Panc1 (cell line): ENCODE measurements at regions of chr5 and their contacts with region 1.

Region 1: DNA sequence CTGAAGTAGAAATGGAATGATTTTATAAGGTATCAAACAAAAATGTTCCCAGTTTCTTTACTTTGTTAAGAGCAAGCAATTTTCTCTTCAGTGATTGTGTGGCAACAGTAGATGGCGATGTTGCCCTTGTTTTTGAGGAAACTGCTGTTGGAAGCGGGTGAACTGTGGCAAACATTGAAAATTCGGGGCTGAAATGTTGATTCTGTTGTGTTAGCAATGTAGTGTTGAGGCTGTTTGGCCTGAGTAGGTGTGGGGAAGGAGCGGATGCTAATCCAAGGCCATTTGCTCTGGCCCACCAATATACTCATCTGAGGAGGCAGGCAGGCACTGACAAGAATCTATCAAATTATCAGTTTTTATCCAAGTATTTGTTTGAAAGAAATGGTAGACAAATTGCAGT is 129.8 kb downstream of the SLC12A2 start:
- DNase-seq: peak; percentile 53
- ATAC-seq: peak; percentile 60; the same call in 1 of the 2 replicates
- H3K4me3 ChIP-seq: no peak overlapping the region
- H3K27ac ChIP-seq: no peak overlapping the region
- H3K4me1 ChIP-seq: no peaks in the 10 kb centered on the region; the same call in 1 of the 2 replicates
- H3K27me3 ChIP-seq: no peaks in the 10 kb centered on the region
- CTCF ChIP-seq: peak; percentile 76

Region 2: DNA sequence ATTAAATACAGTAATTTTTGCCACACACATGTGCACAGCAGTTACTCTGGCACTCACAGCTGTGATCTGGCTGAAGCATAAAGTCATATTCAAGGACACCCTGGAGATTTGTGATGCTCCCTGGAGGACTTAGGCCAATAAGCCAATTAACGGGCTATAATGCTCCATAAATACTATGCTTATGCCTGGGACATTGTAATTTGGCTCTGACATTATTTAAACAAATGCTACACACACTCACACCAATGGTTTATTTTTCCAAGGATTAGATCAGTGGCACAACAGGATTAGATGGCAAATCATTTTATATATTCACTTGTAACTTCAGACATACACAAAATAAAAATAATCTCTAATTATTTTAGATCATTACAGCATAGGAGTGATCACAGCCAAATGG is 1325.2 kb before region 1 on chr5:
- CTCF ChIA-PET with region 1: no interaction called
- POLR2A ChIA-PET with region 1: no interaction called
- in situ Hi-C with region 1: no loop called
- intact Hi-C with region 1: loop called (anchors 5 kb)
- DNase-seq: no peak
- ATAC-seq: no peak
- H3K4me3 ChIP-seq: no peak overlapping the region
- H3K27ac ChIP-seq: no peak overlapping the region
- H3K4me1 ChIP-seq: no peaks in the 10 kb centered on the region
- H3K27me3 ChIP-seq: no peaks in the 10 kb centered on the region
- CTCF ChIP-seq: no peak

Region 3: GRCh38 chr5:128498844-128499455 is 285.6 kb after region 1 on chr5:
- CTCF ChIA-PET with region 1: interaction called, 6 read pairs
- POLR2A ChIA-PET with region 1: no interaction called
- in situ Hi-C with region 1: no loop called
- intact Hi-C with region 1: loop called (anchors 2 kb)
- DNase-seq: no peak
- ATAC-seq: no peak
- H3K4me3 ChIP-seq: no peak overlapping the region
- H3K27ac ChIP-seq: no peak overlapping the region
- H3K4me1 ChIP-seq: no peaks in the 10 kb centered on the region
- H3K27me3 ChIP-seq: no peaks in the 10 kb centered on the region
- CTCF ChIP-seq: peak; percentile 24; the same call in 1 of the 2 replicates

Region 4: GRCh38 chr5:128644863-128645262 is 431.5 kb after region 1 on chr5:
- CTCF ChIA-PET with region 1: no interaction called
- POLR2A ChIA-PET with region 1: no interaction called
- in situ Hi-C with region 1: no loop called
- intact Hi-C with region 1: no loop called
- DNase-seq: no peak
- ATAC-seq: no peak
- H3K4me3 ChIP-seq: no peak overlapping the region
- H3K27ac ChIP-seq: no peak overlapping the region
- H3K4me1 ChIP-seq: no peaks in the 10 kb centered on the region
- H3K27me3 ChIP-seq: no peaks in the 10 kb centered on the region
- CTCF ChIP-seq: no peak

Region 5: GRCh38 chr5:128674825-128675446 is 461.6 kb after region 1 on chr5:
- CTCF ChIA-PET with region 1: no interaction called
- POLR2A ChIA-PET with region 1: no interaction called
- in situ Hi-C with region 1: no loop called
- intact Hi-C with region 1: loop called (anchors 2 kb)
- DNase-seq: peak; percentile 15
- ATAC-seq: no peak
- H3K4me3 ChIP-seq: no peak overlapping the region
- H3K27ac ChIP-seq: no peak overlapping the region
- H3K4me1 ChIP-seq: no peaks in the 10 kb centered on the region
- H3K27me3 ChIP-seq: no peaks in the 10 kb centered on the region
- CTCF ChIP-seq: peak; percentile 68

Region 6: DNA sequence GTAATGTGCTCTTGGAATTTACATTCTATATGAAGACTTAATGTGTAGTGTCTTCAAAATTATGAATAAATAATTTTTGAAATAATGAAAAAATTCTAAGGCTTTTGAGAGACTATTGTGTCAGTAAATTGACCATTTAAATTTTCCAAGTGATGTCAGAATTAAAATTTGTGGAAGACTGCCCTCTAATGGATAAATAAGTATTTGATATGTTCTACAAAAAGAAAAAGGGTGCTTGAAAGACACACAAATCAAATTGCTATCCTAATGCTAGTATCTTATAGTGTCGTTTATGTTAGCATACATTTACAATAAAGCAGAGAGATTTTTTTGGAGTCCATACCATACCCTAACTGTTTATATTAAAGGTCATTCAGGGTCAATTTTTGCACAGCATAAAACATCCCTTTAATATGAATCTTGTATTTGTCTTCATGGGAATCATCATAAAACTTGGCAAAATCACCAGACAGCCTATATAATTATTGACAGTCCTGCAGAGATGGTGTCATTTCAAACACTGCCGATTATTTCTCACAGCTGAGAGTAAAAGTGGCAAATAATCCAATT is 631.1 kb after region 1 on chr5:
- CTCF ChIA-PET with region 1: no interaction called
- POLR2A ChIA-PET with region 1: no interaction called
- in situ Hi-C with region 1: no loop called
- intact Hi-C with region 1: loop called (anchors 5 kb)
- DNase-seq: no peak
- ATAC-seq: no peak
- H3K4me3 ChIP-seq: no peak overlapping the region
- H3K27ac ChIP-seq: no peak overlapping the region
- H3K4me1 ChIP-seq: no peaks in the 10 kb centered on the region
- H3K27me3 ChIP-seq: no peaks in the 10 kb centered on the region
- CTCF ChIP-seq: no peak; the same call in 1 of the 2 replicates